ENCODE measurements at regions of chr19 and their contacts with region 1.

Region 1: DNA sequence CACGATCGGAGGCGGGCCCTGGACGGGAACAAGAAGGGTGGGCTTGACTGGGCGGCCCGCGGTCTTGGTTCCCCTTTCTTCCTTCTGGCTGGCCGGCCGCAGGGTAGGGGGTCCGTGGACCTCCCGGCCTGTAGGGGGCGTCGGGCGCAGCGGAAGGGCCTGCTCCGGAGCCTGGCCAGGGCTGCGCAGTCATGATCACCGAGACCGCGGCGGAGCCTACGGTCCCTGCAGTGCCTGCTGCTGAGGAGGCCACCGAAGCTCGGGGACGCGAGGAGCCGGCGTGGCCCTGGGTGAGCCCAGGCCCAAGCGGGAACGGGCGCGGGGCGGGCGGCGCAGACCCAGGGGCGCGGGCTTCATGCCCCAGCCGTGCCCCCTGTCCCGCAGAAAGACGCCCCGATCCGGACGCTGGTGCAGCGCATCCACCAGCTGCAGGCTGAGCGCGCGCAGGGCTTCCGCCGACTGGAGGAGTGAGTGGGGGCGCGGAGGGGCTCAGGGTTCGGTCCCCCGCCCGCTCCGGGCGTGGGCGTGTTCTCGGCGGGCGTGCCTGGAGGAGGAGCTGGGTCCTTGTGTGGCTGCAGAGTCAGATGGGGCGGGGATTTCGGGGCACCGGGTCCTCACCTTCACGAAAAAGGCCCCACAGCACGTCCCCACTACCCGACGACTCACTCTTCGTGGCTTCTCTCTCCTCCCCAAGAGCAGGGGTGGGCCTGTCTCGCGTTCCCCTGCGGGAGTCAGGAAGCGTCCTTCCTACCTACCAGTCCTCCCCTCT is at the start of gene REX1BD:
- DNase-seq: peak; percentile 86 to 95 (median 87)
- H3K4me3 ChIP-seq: peak within 1 kb of the TSS; percentile 47 to 79
- H3K4me3 Mint-ChIP-seq: peak within 1 kb of the TSS; percentile 82 to 93 (median 89)
- H3K27ac ChIP-seq: peak within 1 kb of the TSS; percentile 67
- H3K27ac Mint-ChIP-seq: peak within 1 kb of the TSS; percentile 83 to 96 (median 92)
- H3K4me1 ChIP-seq: peaks cover 36% of the 10 kb centered on the region
- H3K4me1 Mint-ChIP-seq: peaks cover 21 to 48% (median 35%) of the 10 kb centered on the region in 4 donors
- H3K27me3 ChIP-seq: no peaks in the 10 kb centered on the region
- H3K27me3 Mint-ChIP-seq: no peaks in the 10 kb centered on the region
- total RNA-seq, gene REX1BD: 150 to 154 TPM

Region 2: GRCh38 chr19:18469069-18469846 is 119.5 kb before region 1 on chr19:
- CTCF ChIA-PET with region 1: interaction called, 18 read pairs
- POLR2A ChIA-PET with region 1: interaction called, 21 read pairs
- intact Hi-C with region 1: no loop called
- DNase-seq: peak; percentile 45 to 59 (median 56)
- H3K4me3 ChIP-seq: no peak overlapping the region
- H3K4me3 Mint-ChIP-seq: peak overlapping the region in 1 of 8 donors; percentile 25
- H3K27ac ChIP-seq: no peak overlapping the region
- H3K27ac Mint-ChIP-seq: peak overlapping the region in 6 of 7 donors; percentile 42 to 84 (median 80)
- H3K4me1 ChIP-seq: peaks cover 47% of the 10 kb centered on the region
- H3K4me1 Mint-ChIP-seq: peaks cover 15 to 52% (median 32%) of the 10 kb centered on the region in 4 donors
- H3K27me3 ChIP-seq: no peaks in the 10 kb centered on the region
- H3K27me3 Mint-ChIP-seq: no peaks in the 10 kb centered on the region

Region 3: DNA sequence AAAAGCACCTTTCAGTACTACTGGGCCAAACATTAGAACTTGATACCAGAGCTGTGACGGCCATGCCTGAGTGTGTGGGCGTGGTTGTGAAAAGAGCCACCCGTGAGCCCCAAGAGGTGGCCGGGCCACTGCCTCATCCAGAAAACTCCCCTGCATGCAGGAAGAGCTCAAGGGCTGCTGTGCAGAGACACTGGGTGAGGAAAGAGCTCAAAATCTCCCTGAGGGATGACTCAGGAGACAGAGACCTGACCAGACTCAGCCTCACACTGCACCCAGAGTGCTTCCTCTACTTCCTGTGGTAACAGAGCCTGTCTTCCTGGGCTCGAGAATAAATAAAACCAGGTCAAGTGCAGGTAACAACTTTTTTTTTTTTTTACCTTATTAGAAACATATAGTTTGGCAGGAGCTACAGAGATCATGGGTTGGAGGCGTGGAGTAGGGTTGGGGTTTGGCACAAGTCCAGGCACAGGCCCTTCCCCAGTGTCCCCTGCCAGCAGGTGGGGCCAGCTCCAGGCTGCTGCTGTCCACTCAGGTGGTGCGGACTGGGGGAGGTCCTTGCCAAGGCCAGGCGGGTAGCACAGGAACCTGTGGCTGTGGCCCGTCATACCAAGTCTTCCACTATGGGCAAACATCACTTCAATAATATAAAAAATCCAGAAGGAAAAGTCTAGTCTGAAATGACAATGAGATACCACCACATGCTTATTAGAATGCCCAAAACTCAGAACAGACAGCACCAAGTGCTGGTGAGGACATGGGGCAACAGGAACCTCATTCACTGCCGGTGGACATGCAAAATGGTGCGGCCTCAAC is 92.4 kb before region 1 on chr19:
- CTCF ChIA-PET with region 1: interaction called, 9 read pairs
- POLR2A ChIA-PET with region 1: interaction called, 10 read pairs
- intact Hi-C with region 1: no loop called
- DNase-seq: peak; percentile 75 to 96 (median 83)
- H3K4me3 ChIP-seq: peak overlapping the region; percentile 36 to 43
- H3K4me3 Mint-ChIP-seq: peak overlapping the region; percentile 77 to 86 (median 81)
- H3K27ac ChIP-seq: peak overlapping the region; percentile 90
- H3K27ac Mint-ChIP-seq: peak overlapping the region; percentile 95 to 98 (median 97)
- H3K4me1 ChIP-seq: peaks cover 96% of the 10 kb centered on the region
- H3K4me1 Mint-ChIP-seq: peaks cover 59 to 96% (median 81%) of the 10 kb centered on the region in 4 donors
- H3K27me3 ChIP-seq: no peaks in the 10 kb centered on the region
- H3K27me3 Mint-ChIP-seq: no peaks in the 10 kb centered on the region

Region 4: DNA sequence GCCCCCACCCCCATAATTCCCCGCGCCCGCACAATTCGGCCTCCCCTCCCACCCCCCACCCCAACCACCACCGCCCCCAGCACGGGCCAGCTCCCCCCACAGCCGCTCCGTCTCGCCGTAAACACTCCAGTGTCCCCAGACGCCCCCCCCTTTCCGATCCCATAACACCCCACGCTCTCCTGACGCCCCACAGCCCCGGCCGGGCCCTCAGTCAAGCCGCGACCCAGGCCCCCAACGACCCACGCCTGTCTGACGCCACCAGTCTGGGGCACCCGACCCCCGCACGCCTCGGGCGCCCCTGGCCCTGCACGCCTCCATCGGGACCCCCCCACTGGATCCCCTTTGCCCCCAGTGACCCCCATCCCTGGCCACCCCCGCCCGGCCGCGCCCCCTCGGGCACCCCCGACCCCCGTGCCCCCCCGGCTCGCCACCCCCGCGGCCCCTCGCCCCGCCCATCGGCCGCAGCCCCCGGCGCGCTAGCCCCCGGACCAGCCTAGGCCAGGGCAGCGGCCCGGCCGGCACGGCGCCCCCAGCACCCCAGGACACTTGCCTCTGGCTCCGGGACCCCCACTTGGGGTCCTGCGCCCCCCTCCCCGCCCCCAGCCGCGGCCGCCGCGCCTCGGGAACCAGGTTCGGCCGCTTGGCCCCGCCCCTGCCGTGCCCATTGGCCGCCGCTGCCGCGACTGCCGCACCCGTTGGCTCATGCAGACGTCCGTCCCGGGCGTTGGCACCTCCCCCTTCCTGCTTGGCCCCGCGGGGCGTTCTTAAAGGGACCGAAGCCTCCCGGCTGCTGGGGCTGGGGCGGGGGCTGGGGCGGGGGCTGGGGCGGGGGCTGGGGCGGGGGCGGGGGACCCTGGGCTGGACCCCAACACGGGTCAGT is 45.6 kb before region 1 on chr19 and contains the start of gene FKBP8:
- CTCF ChIA-PET with region 1: interaction called, 16 read pairs
- POLR2A ChIA-PET with region 1: interaction called, 35 read pairs
- intact Hi-C with region 1: loop called (anchors 1 kb)
- DNase-seq: peak; percentile 89 to 94 (median 91)
- H3K4me3 ChIP-seq: peak within 1 kb of the TSS; percentile 52 to 59
- H3K4me3 Mint-ChIP-seq: peak within 1 kb of the TSS; percentile 91 to 100 (median 96)
- H3K27ac ChIP-seq: peak within 1 kb of the TSS; percentile 78
- H3K27ac Mint-ChIP-seq: peak within 1 kb of the TSS; percentile 97 to 99 (median 98)
- H3K4me1 ChIP-seq: peaks cover 25% of the 10 kb centered on the region
- H3K4me1 Mint-ChIP-seq: peaks cover 8 to 35% (median 21%) of the 10 kb centered on the region in 4 donors
- H3K27me3 ChIP-seq: no peaks in the 10 kb centered on the region
- H3K27me3 Mint-ChIP-seq: no peaks in the 10 kb centered on the region
- total RNA-seq, gene FKBP8: 231 to 249 TPM

Region 5: GRCh38 chr19:18571564-18572300 is 17.1 kb before region 1 on chr19 and contains the start of gene UBA52:
- CTCF ChIA-PET with region 1: interaction called, 53 read pairs
- POLR2A ChIA-PET with region 1: interaction called, 122 read pairs
- intact Hi-C with region 1: loop called (anchors 1 kb)
- DNase-seq: peak; percentile 98 to 99 (median 99)
- H3K4me3 ChIP-seq: peak within 1 kb of the TSS; percentile 69 to 92
- H3K4me3 Mint-ChIP-seq: peak within 1 kb of the TSS; percentile 89 to 97 (median 94)
- H3K27ac ChIP-seq: peak within 1 kb of the TSS; percentile 97
- H3K27ac Mint-ChIP-seq: peak within 1 kb of the TSS; percentile 97 to 99 (median 98)
- H3K4me1 ChIP-seq: peaks cover 26% of the 10 kb centered on the region
- H3K4me1 Mint-ChIP-seq: peaks cover 12 to 36% (median 22%) of the 10 kb centered on the region in 4 donors
- H3K27me3 ChIP-seq: no peaks in the 10 kb centered on the region
- H3K27me3 Mint-ChIP-seq: no peaks in the 10 kb centered on the region
- total RNA-seq, gene UBA52: 1,962 to 1,978 TPM

Region 6: DNA sequence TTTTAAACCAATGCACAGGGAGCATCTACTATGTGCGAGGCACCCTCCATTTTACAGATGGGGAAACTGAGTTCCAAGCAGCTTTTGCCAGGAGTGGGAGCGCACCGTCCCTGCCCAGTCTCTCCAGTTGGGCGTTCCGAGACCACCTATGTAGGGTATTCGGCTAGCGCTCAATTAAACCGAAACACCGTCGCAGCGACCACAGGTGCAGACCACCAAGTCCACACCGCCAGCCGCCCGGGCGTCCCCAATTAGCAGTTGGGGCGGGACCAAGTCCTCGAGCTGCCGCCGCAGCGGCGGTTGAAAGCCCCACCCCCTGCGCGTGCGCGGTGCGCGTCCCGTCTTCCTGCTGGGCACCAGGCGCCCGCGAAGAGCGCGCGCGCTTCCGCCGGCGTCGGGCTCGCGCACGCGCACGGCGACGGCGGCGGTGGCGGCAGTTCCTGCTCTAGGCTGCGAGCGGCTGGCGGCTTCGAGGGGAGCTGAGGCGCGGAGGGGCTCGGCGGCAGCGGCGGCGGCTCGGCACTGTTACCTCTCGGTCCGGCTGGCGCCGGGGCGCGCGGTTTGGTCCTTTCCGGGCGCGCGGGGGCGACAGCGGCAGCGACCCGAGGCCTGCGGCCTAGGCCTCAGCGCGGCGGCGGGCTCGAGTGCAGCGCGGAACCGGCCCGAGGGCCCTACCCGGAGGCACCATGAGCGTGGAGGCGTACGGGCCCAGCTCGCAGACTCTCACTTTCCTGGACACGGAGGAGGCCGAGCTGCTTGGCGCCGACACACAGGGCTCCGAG is 242.9 kb after region 1 on chr19 and contains the start of gene UPF1:
- CTCF ChIA-PET with region 1: interaction called, 8 read pairs
- POLR2A ChIA-PET with region 1: interaction called, 19 read pairs
- intact Hi-C with region 1: no loop called
- DNase-seq: peak; percentile 94 to 97 (median 95)
- H3K4me3 ChIP-seq: peak within 1 kb of the TSS; percentile 64 to 85
- H3K4me3 Mint-ChIP-seq: peak within 1 kb of the TSS; percentile 90 to 99 (median 95)
- H3K27ac ChIP-seq: peak within 1 kb of the TSS; percentile 75
- H3K27ac Mint-ChIP-seq: peak within 1 kb of the TSS; percentile 89 to 96 (median 93)
- H3K4me1 ChIP-seq: peaks cover 36% of the 10 kb centered on the region
- H3K4me1 Mint-ChIP-seq: peaks cover 29 to 47% (median 36%) of the 10 kb centered on the region in 4 donors
- H3K27me3 ChIP-seq: no peaks in the 10 kb centered on the region
- H3K27me3 Mint-ChIP-seq: peaks cover 2 to 5% of the 10 kb centered on the region in 2 donors
- total RNA-seq, gene UPF1: 127 to 130 TPM

Region 7: GRCh38 chr19:19911150-19911549 is 1322.4 kb after region 1 on chr19:
- CTCF ChIA-PET with region 1: no interaction called
- POLR2A ChIA-PET with region 1: no interaction called
- intact Hi-C with region 1: no loop called
- DNase-seq: no peak
- H3K4me3 ChIP-seq: no peak overlapping the region
- H3K4me3 Mint-ChIP-seq: no peak overlapping the region
- H3K27ac ChIP-seq: no peak overlapping the region
- H3K27ac Mint-ChIP-seq: no peak overlapping the region
- H3K4me1 ChIP-seq: no peaks in the 10 kb centered on the region
- H3K4me1 Mint-ChIP-seq: peaks cover 0 to 2% (median under 1%) of the 10 kb centered on the region in 4 donors
- H3K27me3 ChIP-seq: no peaks in the 10 kb centered on the region
- H3K27me3 Mint-ChIP-seq: no peaks in the 10 kb centered on the region